K562 (cell line): ENCODE measurements at regions of chr16 and their contacts with region 1.

Region 1: DNA sequence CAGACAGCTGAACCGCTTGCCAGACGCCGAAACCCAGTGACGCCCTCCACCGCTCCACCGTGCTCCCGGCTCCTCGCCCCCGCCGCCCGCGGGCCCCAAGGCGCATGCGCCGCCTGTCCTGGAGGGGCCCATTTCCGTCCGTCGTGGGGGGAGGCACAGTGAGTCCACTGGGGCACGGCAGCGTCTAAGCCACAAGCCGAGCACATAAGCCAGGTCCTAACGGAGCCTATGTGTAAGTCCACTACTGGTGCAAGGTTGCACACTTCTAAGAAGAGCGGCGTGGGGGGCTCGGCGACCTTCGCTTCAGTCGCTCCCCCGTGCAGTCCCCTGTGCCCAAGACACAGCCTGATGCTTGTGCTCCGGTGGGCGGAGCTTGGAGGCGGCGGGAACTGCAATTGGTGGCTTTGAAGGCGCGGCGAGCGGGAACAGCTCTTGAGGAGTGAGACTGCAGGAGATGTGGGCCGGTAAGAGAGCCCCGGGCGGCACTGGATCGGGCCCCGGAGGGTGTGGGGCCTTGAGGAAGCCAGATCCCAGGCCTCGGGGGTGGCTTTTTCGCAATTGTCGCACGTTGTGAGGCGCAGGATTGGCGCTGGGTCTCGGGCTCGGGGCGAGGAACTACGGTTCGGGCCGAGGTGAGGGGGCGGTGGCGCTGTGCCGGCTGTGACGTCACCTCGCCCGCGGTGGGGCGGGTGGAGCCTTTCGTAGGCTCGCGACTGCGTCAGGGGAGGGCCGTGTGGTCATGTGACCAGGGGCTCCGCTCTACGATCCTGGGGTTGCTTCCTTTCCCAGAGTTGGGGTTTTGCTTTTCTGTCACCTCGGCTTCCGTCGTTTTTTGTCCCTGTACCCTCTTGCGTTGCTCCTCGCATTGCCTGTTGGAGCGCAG is at the starts of genes CENPN and CMC2:
- DNase-seq: peak; percentile 92 to 100 (median 95)
- ATAC-seq: peak; percentile 91
- H3K4me3 ChIP-seq: peak within 1 kb of the TSS; percentile 82
- H3K27ac ChIP-seq: peak within 1 kb of the TSS; percentile 100
- H3K4me1 ChIP-seq: peaks cover 21 to 30% of the 10 kb centered on the region in 2 experiments; a peak in 4 of 5 replicates
- H3K27me3 ChIP-seq: no peaks in the 10 kb centered on the region
- CTCF ChIP-seq: peak in 1 of 3 experiments; percentile 15; a peak in 2 of 6 replicates
- EP300 ChIP-seq: no peak; the same call in none of the 2 replicates
- POLR2A ChIP-seq: peak; percentile 97
- RAD21 ChIP-seq: no peak
- polyA plus RNA-seq, gene CENPN: 343 to 384 TPM
- polyA plus RNA-seq, gene CMC2: 434 to 501 TPM

Region 2: DNA sequence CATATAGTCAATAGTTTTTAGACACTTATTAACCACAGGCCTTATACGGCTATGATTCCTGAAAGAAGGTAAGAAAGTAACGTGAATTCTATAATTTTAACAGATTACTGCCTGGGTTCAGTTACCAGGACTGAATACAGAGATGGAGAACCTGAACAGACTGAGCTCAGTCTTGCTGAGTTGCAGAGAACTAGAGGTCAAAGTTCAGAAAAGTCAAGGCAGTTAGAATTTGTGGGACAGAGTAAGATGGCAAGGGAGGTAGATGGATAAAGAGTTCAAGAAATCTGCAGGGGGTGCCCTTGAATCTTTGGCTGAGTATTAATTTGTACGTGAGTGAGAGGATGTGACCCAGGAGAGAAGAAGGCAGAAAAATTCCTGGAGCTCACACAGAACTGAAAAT is 1086.4 kb before region 1 on chr16:
- CTCF ChIA-PET with region 1: no interaction called
- POLR2A ChIA-PET with region 1: no interaction called
- in situ Hi-C with region 1: no loop called
- intact Hi-C with region 1: loop called (anchors 5 kb)
- DNase-seq: no peak
- ATAC-seq: no peak
- H3K4me3 ChIP-seq: no peak overlapping the region
- H3K27ac ChIP-seq: no peak overlapping the region
- H3K4me1 ChIP-seq: no peaks in the 10 kb centered on the region
- H3K27me3 ChIP-seq: no peaks in the 10 kb centered on the region
- CTCF ChIP-seq: no peak
- EP300 ChIP-seq: no peak
- POLR2A ChIP-seq: no peak
- RAD21 ChIP-seq: no peak

Region 3: DNA sequence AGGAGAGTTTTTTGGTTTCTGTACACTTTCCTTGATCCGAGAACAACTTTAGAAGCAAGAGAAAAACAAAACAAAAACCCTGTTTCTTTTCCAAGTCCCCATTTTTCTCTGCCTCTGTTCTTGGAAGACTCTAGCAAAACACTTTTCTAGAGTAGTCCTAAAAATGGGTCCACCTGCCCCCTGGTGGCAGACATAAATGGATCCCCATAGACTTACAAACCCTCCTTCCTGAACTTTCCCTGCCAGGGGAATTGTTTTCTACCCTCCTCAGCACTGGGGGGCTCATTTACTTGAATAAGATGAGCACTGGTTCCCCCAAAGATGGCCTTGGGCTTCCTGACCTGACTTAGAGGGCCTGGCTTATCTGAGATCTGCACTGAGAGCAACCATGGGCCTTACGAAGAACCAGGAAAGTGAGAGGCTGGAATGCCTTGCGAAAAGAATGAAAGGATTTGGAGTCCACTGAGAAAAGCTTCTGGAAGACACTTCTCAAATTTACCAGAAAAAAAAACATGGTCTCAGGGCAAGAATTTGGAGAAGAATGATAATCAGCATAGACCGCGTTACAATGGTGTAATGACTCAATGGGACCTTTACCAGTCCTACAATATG is 154.7 kb before region 1 on chr16:
- CTCF ChIA-PET with region 1: no interaction called
- POLR2A ChIA-PET with region 1: no interaction called
- in situ Hi-C with region 1: no loop called
- intact Hi-C with region 1: no loop called
- DNase-seq: peak; percentile 37 to 53 (median 48)
- ATAC-seq: peak; percentile 81
- H3K4me3 ChIP-seq: no peak overlapping the region
- H3K27ac ChIP-seq: no peak overlapping the region
- H3K4me1 ChIP-seq: no peaks in the 10 kb centered on the region
- H3K27me3 ChIP-seq: no peaks in the 10 kb centered on the region
- CTCF ChIP-seq: peak; percentile 41 to 64 (median 56); a peak in 5 of 6 replicates
- EP300 ChIP-seq: no peak
- POLR2A ChIP-seq: no peak
- RAD21 ChIP-seq: peak in 1 of 2 experiments; percentile 39; a peak in 2 of 4 replicates

Region 4: DNA sequence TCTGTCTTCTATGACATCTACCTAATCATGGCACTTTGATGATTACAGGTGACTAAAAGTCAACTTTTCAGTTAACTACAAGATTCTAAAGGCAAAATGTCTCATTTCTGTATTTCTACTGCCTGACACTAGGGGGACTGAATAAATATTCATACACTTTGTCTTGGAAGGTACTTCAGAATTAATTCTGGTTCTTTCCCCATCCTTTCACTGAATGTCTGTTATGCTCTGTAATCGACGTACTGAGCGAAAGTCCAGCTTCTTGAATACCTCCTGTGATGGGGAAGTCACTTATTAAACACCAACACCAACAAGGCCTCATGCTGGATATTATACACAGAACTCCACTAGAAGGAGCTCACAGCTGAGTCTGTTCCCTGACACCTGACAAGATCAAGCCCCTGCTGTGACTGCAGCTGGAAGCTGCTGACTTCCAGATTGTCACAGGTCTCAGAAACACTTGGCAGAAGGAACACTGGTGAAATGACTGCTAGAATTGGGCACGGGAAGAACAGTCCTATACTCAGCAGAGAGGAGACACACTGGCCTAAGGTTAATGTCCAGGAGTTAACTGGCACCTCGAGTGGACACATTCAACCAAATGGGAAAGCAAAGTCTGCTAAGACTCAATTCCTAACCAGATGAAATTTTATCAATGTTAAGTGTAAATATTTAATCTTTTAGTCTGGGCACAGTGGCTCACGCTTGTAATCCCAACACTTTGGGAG is 32.2 kb before region 1 on chr16:
- CTCF ChIA-PET with region 1: no interaction called
- POLR2A ChIA-PET with region 1: no interaction called
- in situ Hi-C with region 1: no loop called
- intact Hi-C with region 1: loop called (anchors 2 kb)
- DNase-seq: peak in 3 of 4 experiments; percentile 24 to 32 (median 30)
- ATAC-seq: peak; percentile 68
- H3K4me3 ChIP-seq: no peak overlapping the region
- H3K27ac ChIP-seq: no peak overlapping the region
- H3K4me1 ChIP-seq: no peaks in the 10 kb centered on the region; a peak in 1 of 5 replicates
- H3K27me3 ChIP-seq: no peaks in the 10 kb centered on the region
- CTCF ChIP-seq: peak; percentile 51 to 70 (median 68)
- EP300 ChIP-seq: no peak
- POLR2A ChIP-seq: no peak
- RAD21 ChIP-seq: peak in 1 of 2 experiments; percentile 31; a peak in 1 of 4 replicates

Region 5: GRCh38 chr16:81018496-81018895 is 11.4 kb after region 1 on chr16:
- CTCF ChIA-PET with region 1: interaction called, 4 read pairs
- POLR2A ChIA-PET with region 1: interaction called, 47 read pairs
- in situ Hi-C with region 1: no loop called
- intact Hi-C with region 1: no loop called
- DNase-seq: no peak
- ATAC-seq: no peak
- H3K4me3 ChIP-seq: no peak overlapping the region
- H3K27ac ChIP-seq: no peak overlapping the region
- H3K4me1 ChIP-seq: no peaks in the 10 kb centered on the region
- H3K27me3 ChIP-seq: no peaks in the 10 kb centered on the region
- CTCF ChIP-seq: no peak
- EP300 ChIP-seq: no peak
- POLR2A ChIP-seq: no peak
- RAD21 ChIP-seq: no peak

Region 6: GRCh38 chr16:81035398-81035974 is 28.4 kb after region 1 on chr16 and contains the start of gene ATMIN:
- CTCF ChIA-PET with region 1: interaction called, 3 read pairs
- POLR2A ChIA-PET with region 1: interaction called, 11 read pairs
- in situ Hi-C with region 1: no loop called
- intact Hi-C with region 1: no loop called
- DNase-seq: peak; percentile 94 to 98 (median 96)
- ATAC-seq: peak; percentile 96
- H3K4me3 ChIP-seq: peak within 1 kb of the TSS; percentile 86
- H3K27ac ChIP-seq: peak within 1 kb of the TSS; percentile 72
- H3K4me1 ChIP-seq: peaks cover 9 to 14% of the 10 kb centered on the region in 2 experiments
- H3K27me3 ChIP-seq: no peaks in the 10 kb centered on the region
- CTCF ChIP-seq: peak; percentile 98 to 100 (median 99)
- EP300 ChIP-seq: peak; percentile 45
- POLR2A ChIP-seq: no peak
- RAD21 ChIP-seq: peak; percentile 79 to 91
- polyA plus RNA-seq, gene ATMIN: 6.7 to 7.8 TPM

Region 7: GRCh38 chr16:81095953-81096717 is 89.1 kb after region 1 on chr16 and contains the start of gene GCSH:
- CTCF ChIA-PET with region 1: no interaction called
- POLR2A ChIA-PET with region 1: no interaction called
- in situ Hi-C with region 1: no loop called
- intact Hi-C with region 1: loop called (anchors 1 kb)
- DNase-seq: peak; percentile 99 to 100 (median 99)
- ATAC-seq: peak; percentile 98
- H3K4me3 ChIP-seq: peak within 1 kb of the TSS; percentile 93
- H3K27ac ChIP-seq: peak within 1 kb of the TSS; percentile 92
- H3K4me1 ChIP-seq: peaks cover 21 to 26% of the 10 kb centered on the region in 2 experiments
- H3K27me3 ChIP-seq: no peaks in the 10 kb centered on the region
- CTCF ChIP-seq: no peak
- EP300 ChIP-seq: no peak
- POLR2A ChIP-seq: no peak; the same call in none of the 2 replicates
- RAD21 ChIP-seq: no peak
- polyA plus RNA-seq, gene GCSH: 35.0 to 35.2 TPM

Region 8: GRCh38 chr16:81737885-81738786 is 731.1 kb after region 1 on chr16:
- CTCF ChIA-PET with region 1: no interaction called
- POLR2A ChIA-PET with region 1: no interaction called
- in situ Hi-C with region 1: loop called (anchors 25 kb)
- intact Hi-C with region 1: no loop called
- DNase-seq: peak; percentile 89 to 93 (median 90)
- ATAC-seq: peak; percentile 95
- H3K4me3 ChIP-seq: no peak overlapping the region
- H3K27ac ChIP-seq: no peak overlapping the region
- H3K4me1 ChIP-seq: peaks cover 17 to 18% of the 10 kb centered on the region in 2 experiments
- H3K27me3 ChIP-seq: peaks cover 0 to 4% of the 10 kb centered on the region in 2 experiments; a peak in 1 of 5 replicates
- CTCF ChIP-seq: peak; percentile 94 to 97 (median 96)
- EP300 ChIP-seq: no peak; the same call in 1 of the 2 replicates
- POLR2A ChIP-seq: no peak
- RAD21 ChIP-seq: peak; percentile 95 to 99